Prostate gland (tissue), 2 donors: ENCODE measurements at regions of chr3 and their contacts with region 1.

Region 1: GRCh38 chr3:112519424-112520001 is 20.2 kb upstream of the BTLA start:
- DNase-seq: peak; percentile 51
- H3K4me3 ChIP-seq: no peak overlapping the region
- H3K27ac ChIP-seq: no peak overlapping the region
- H3K4me1 ChIP-seq: no peaks in the 10 kb centered on the region
- H3K27me3 ChIP-seq: no peaks in the 10 kb centered on the region
- CTCF ChIP-seq: peak; percentile 36 to 90 (median 82)
- POLR2A ChIP-seq: no peak

Region 2: GRCh38 chr3:112304611-112305010 is 214.9 kb before region 1 on chr3:
- intact Hi-C with region 1: loop called (anchors 5 kb)
- DNase-seq: no peak
- H3K4me3 ChIP-seq: no peak overlapping the region
- H3K27ac ChIP-seq: peak overlapping the region; percentile 19 to 40
- H3K4me1 ChIP-seq: no peaks in the 10 kb centered on the region
- H3K27me3 ChIP-seq: no peaks in the 10 kb centered on the region
- CTCF ChIP-seq: peak in 1 of 4 experiments; percentile 12
- POLR2A ChIP-seq: no peak

Region 3: DNA sequence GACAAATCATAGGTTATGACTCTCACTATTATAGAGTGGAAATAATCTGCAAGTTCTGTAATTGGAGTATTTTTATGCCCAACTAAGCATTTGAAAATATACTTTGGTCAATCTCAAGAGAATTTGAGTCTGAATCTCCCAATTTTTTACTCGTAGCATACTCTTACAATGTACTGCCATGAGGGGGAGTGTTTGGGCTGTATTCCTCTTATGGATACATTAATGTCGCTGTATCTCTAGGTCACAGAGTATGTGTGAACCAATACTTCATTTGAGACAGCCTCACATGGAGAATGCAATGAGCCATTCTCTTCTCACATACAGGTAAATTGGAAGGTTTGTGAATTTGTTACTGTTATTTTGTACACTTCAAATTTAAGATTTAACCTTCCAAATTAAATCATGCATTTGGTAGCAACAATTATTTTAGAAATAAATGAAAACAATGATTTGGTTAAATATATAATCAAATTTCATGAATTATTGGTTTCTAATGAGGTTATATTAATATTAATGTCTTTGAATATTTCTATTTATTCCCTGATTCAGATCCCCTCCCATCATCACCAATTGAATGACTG is 192.1 kb before region 1 on chr3:
- intact Hi-C with region 1: loop called (anchors 2 kb)
- DNase-seq: peak; percentile 33
- H3K4me3 ChIP-seq: no peak overlapping the region
- H3K27ac ChIP-seq: no peak overlapping the region
- H3K4me1 ChIP-seq: no peaks in the 10 kb centered on the region
- H3K27me3 ChIP-seq: no peaks in the 10 kb centered on the region
- CTCF ChIP-seq: peak in 3 of 4 experiments; percentile 42 to 73 (median 66)
- POLR2A ChIP-seq: no peak